ENCODE measurements at regions of chr18 and their contacts with region 1.

Region 1: DNA sequence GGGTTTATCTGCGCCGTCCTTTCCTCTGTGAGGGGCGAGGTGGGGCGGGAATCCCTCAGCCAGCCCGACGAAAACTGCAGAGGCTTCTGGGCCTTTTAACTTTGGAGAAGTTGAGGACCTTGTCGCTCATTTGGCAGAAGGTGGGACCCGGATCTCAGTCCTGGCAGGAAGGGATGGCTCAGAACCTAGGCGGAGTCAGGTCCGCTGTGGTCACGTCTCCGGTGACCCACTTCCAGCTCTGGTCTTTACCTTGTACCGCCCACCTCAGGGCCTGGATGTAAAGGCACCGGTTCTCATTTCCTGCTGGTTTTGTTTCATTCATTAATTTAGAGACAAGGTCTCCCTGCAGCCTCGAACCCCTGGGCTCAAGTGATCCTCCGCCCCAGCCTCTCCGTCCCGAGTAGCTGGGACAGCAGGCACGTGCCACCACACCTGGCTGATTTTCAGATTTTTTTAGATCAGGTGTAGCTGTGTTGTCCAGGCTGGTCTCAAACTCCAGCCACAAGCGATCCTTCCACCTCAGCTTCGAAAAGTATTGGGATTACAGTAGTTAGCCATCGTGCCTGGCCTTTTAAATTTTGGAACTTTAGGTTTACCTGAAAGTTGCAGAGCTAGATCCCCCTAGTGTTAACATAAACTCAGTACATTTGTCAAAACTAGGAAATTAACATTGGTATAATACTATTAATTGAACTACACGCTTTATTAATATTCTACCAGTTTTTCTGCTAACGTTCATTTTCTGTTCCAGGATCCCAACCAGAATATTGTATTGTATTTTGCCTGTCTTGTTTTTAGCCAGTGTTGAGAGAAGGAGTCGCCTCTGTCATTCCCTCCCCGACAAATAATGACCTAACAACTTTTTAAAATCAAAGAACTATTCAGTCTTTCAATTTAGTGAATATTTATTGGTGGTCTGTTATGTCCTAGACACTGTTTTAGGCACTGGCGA is 852 bp downstream of the POLI start:
- DNase-seq: peak in 8 of 9 donors; percentile 2 to 60 (median 30)
- ATAC-seq: peak; percentile 26
- H3K4me3 ChIP-seq: peak overlapping the region; percentile 94
- H3K4me3 Mint-ChIP-seq: peak overlapping the region; percentile 82 to 97 (median 91)
- H3K27ac ChIP-seq: peak overlapping the region; percentile 85
- H3K27ac Mint-ChIP-seq: peak overlapping the region; percentile 71 to 96 (median 94)
- H3K4me1 ChIP-seq: peaks cover 16 to 17% of the 10 kb centered on the region in 2 donors
- H3K4me1 Mint-ChIP-seq: peaks cover 5 to 45% (median 22%) of the 10 kb centered on the region in 7 donors
- H3K27me3 ChIP-seq: no peaks in the 10 kb centered on the region
- H3K27me3 Mint-ChIP-seq: no peaks in the 10 kb centered on the region

Region 2: GRCh38 chr18:52510139-52510538 is 1760.0 kb before region 1 on chr18:
- CTCF ChIA-PET with region 1: no interaction called
- POLR2A ChIA-PET with region 1: no interaction called
- intact Hi-C with region 1: no loop called
- DNase-seq: no peak
- ATAC-seq: no peak
- H3K4me3 ChIP-seq: no peak overlapping the region
- H3K4me3 Mint-ChIP-seq: no peak overlapping the region
- H3K27ac ChIP-seq: no peak overlapping the region
- H3K27ac Mint-ChIP-seq: no peak overlapping the region
- H3K4me1 ChIP-seq: no peaks in the 10 kb centered on the region
- H3K4me1 Mint-ChIP-seq: no peaks in the 10 kb centered on the region
- H3K27me3 ChIP-seq: no peaks in the 10 kb centered on the region
- H3K27me3 Mint-ChIP-seq: no peaks in the 10 kb centered on the region

Region 3: DNA sequence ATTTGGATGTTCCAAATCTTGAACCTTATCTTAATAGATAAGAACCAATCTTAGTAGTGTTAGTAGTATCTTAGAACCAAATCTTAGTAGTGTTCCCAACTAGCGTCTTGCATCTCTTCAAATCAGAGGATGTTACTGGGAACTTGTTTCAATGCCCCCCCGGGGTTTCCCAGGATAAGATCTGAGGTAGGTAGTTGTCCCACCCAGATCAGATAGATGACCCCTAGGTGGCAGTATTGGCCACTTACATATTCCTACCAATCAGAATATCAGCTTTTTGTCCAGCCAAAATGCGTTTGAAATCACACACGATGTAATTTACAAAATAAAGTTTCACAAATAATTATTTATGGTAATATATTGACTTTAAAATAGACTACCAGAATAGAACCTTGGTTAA is 360.5 kb before region 1 on chr18:
- CTCF ChIA-PET with region 1: no interaction called
- POLR2A ChIA-PET with region 1: no interaction called
- intact Hi-C with region 1: loop called in 1 of 2 experiments (anchors 10 kb)
- DNase-seq: no peak
- ATAC-seq: no peak
- H3K4me3 ChIP-seq: no peak overlapping the region
- H3K4me3 Mint-ChIP-seq: no peak overlapping the region
- H3K27ac ChIP-seq: no peak overlapping the region
- H3K27ac Mint-ChIP-seq: no peak overlapping the region
- H3K4me1 ChIP-seq: no peaks in the 10 kb centered on the region
- H3K4me1 Mint-ChIP-seq: no peaks in the 10 kb centered on the region
- H3K27me3 ChIP-seq: no peaks in the 10 kb centered on the region
- H3K27me3 Mint-ChIP-seq: peaks cover 0 to 11% (median 5%) of the 10 kb centered on the region in 5 donors

Region 4: GRCh38 chr18:54173980-54174630 is 96.1 kb before region 1 on chr18:
- CTCF ChIA-PET with region 1: interaction called, 5 read pairs
- POLR2A ChIA-PET with region 1: no interaction called
- intact Hi-C with region 1: loop called (anchors 1 to 5 kb)
- DNase-seq: peak in 1 of 9 donors; percentile 0
- ATAC-seq: no peak
- H3K4me3 ChIP-seq: no peak overlapping the region
- H3K4me3 Mint-ChIP-seq: peak overlapping the region in 1 of 10 donors; percentile 39
- H3K27ac ChIP-seq: no peak overlapping the region
- H3K27ac Mint-ChIP-seq: peak overlapping the region; percentile 7 to 79 (median 44)
- H3K4me1 ChIP-seq: no peaks in the 10 kb centered on the region
- H3K4me1 Mint-ChIP-seq: peaks cover 11 to 48% (median 26%) of the 10 kb centered on the region in 7 donors
- H3K27me3 ChIP-seq: no peaks in the 10 kb centered on the region
- H3K27me3 Mint-ChIP-seq: no peaks in the 10 kb centered on the region

Region 5: GRCh38 chr18:54247511-54248175 is 22.5 kb before region 1 on chr18:
- CTCF ChIA-PET with region 1: interaction called, 4 read pairs
- POLR2A ChIA-PET with region 1: interaction called, 15 read pairs
- intact Hi-C with region 1: loop called in 1 of 2 experiments (anchors 1 kb)
- DNase-seq: no peak
- ATAC-seq: no peak
- H3K4me3 ChIP-seq: no peak overlapping the region
- H3K4me3 Mint-ChIP-seq: peak overlapping the region; percentile 23 to 85 (median 72)
- H3K27ac ChIP-seq: peak overlapping the region; percentile 68
- H3K27ac Mint-ChIP-seq: peak overlapping the region in 8 of 9 donors; percentile 88 to 96 (median 95)
- H3K4me1 ChIP-seq: peaks cover 0 to 10% of the 10 kb centered on the region in 2 donors
- H3K4me1 Mint-ChIP-seq: peaks cover 10 to 29% (median 24%) of the 10 kb centered on the region in 7 donors
- H3K27me3 ChIP-seq: no peaks in the 10 kb centered on the region
- H3K27me3 Mint-ChIP-seq: no peaks in the 10 kb centered on the region

Region 6: DNA sequence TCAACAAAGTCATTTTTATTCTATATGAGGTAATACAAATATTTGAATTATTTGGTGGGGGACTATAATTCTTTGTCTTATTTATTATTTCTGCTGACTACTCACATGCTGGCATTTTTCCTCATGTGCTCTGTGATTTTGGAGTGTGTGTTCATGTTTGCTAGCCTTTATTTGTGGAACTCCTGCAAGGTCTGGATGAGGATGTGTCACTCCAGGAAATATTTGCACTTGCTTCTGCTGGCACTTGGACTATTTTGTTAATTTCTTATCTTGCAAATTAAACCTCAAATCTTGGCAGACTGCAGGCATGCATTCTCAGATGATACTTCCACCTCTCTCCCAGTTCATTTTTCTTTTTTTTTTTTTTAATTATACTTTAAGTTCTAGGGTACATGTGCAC is 33.2 kb after region 1 on chr18:
- CTCF ChIA-PET with region 1: no interaction called
- POLR2A ChIA-PET with region 1: no interaction called
- intact Hi-C with region 1: no loop called
- DNase-seq: no peak
- ATAC-seq: no peak
- H3K4me3 ChIP-seq: no peak overlapping the region
- H3K4me3 Mint-ChIP-seq: no peak overlapping the region
- H3K27ac ChIP-seq: no peak overlapping the region
- H3K27ac Mint-ChIP-seq: no peak overlapping the region
- H3K4me1 ChIP-seq: no peaks in the 10 kb centered on the region
- H3K4me1 Mint-ChIP-seq: no peaks in the 10 kb centered on the region
- H3K27me3 ChIP-seq: no peaks in the 10 kb centered on the region
- H3K27me3 Mint-ChIP-seq: peaks cover 0 to 17% (median 0%) of the 10 kb centered on the region in 5 donors

Region 7: DNA sequence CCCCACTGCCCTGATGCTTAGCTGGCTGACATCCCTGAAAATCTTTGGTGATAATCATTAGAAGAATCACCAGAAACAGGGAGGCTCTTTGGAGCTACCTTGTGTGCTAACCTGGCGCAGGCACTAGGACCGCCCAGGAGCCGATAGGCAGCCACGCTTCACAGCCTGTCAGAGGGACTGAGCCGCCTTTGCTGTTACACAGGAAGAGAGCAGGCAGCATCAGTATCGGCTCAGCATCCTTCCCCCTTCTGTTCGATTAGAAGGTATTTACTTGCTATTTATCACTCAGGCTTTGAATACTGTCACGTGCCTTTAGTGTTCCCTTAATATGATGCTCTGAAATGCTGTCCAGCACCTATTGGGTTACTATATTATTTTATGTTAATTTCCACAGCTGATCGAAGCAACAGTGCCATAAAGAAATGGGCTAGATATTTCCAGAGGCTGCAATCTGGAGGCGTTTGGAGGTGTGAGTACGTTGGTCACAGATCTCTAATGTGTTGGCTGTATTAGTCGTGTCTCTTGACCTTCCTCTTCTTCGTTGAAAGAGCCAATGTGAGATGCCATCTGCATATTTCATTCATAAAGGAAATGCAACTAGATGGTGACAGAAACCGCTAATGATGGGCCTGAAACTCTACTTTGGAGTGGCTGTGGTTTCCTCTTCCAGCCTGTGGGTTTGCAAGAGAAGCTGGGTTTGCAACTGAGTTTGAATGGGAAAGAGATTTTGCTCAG is 447.7 kb after region 1 on chr18:
- CTCF ChIA-PET with region 1: no interaction called
- POLR2A ChIA-PET with region 1: no interaction called
- intact Hi-C with region 1: loop called in 1 of 2 experiments (anchors 10 kb)
- DNase-seq: peak in 8 of 9 donors; percentile 9 to 46 (median 34)
- ATAC-seq: peak; percentile 92
- H3K4me3 ChIP-seq: peak overlapping the region; percentile 61
- H3K4me3 Mint-ChIP-seq: peak overlapping the region; percentile 38 to 90 (median 76)
- H3K27ac ChIP-seq: no peak overlapping the region
- H3K27ac Mint-ChIP-seq: peak overlapping the region in 6 of 9 donors; percentile 3 to 76 (median 26)
- H3K4me1 ChIP-seq: peaks cover 15 to 22% of the 10 kb centered on the region in 2 donors
- H3K4me1 Mint-ChIP-seq: peaks cover 23 to 54% (median 45%) of the 10 kb centered on the region in 7 donors
- H3K27me3 ChIP-seq: no peaks in the 10 kb centered on the region
- H3K27me3 Mint-ChIP-seq: peaks cover 0 to 37% (median 8%) of the 10 kb centered on the region in 5 donors

Measured in naive thymus-derived CD4-positive, alpha-beta T cell (primary cell).